ENCODE measurements at regions of chr9 and their contacts with region 1.

Region 1: DNA sequence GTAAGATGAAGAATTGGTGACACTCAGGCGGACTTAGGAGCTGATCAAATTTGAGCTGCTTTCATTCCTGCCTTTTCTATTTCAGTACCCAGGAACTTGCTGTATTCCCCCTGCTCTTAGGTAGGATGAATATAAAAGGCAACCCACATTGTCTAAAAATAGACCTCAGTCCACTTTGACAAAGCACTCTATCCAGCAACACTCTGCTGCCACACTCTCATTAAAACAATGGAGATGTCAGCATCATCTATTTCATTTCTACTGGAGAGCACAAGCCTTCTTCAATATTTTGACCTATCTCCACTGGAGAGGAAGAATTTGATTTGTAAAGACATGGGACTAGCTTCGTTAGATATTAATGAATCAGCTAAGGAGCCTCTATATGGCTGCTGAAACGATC is 468.4 kb downstream of the PTPRD start:
- DNase-seq: no peak
- H3K4me3 ChIP-seq: no peak overlapping the region
- H3K4me3 Mint-ChIP-seq: no peak overlapping the region
- H3K27ac ChIP-seq: no peak overlapping the region
- H3K27ac Mint-ChIP-seq: no peak overlapping the region
- H3K4me1 ChIP-seq: no peaks in the 10 kb centered on the region
- H3K4me1 Mint-ChIP-seq: no peaks in the 10 kb centered on the region
- H3K27me3 ChIP-seq: no peaks in the 10 kb centered on the region
- H3K27me3 Mint-ChIP-seq: peaks cover 0 to 2% (median 0%) of the 10 kb centered on the region in 3 donors
- CTCF ChIP-seq: no peak

Region 2: GRCh38 chr9:10208691-10209069 is 64.3 kb after region 1 on chr9:
- intact Hi-C with region 1: loop called in 1 of 2 experiments (anchors 10 kb)
- DNase-seq: no peak
- H3K4me3 ChIP-seq: no peak overlapping the region
- H3K4me3 Mint-ChIP-seq: peak overlapping the region in 1 of 2 donors; percentile 81
- H3K27ac ChIP-seq: no peak overlapping the region
- H3K27ac Mint-ChIP-seq: no peak overlapping the region
- H3K4me1 ChIP-seq: no peaks in the 10 kb centered on the region
- H3K4me1 Mint-ChIP-seq: no peaks in the 10 kb centered on the region
- H3K27me3 ChIP-seq: no peaks in the 10 kb centered on the region
- H3K27me3 Mint-ChIP-seq: peaks cover 5 to 8% (median 6%) of the 10 kb centered on the region in 3 donors
- CTCF ChIP-seq: no peak

Region 3: GRCh38 chr9:10238087-10238486 is 93.7 kb after region 1 on chr9:
- intact Hi-C with region 1: no loop called
- DNase-seq: no peak
- H3K4me3 ChIP-seq: no peak overlapping the region
- H3K4me3 Mint-ChIP-seq: no peak overlapping the region
- H3K27ac ChIP-seq: no peak overlapping the region
- H3K27ac Mint-ChIP-seq: no peak overlapping the region
- H3K4me1 ChIP-seq: no peaks in the 10 kb centered on the region
- H3K4me1 Mint-ChIP-seq: no peaks in the 10 kb centered on the region
- H3K27me3 ChIP-seq: no peaks in the 10 kb centered on the region
- H3K27me3 Mint-ChIP-seq: no peaks in the 10 kb centered on the region
- CTCF ChIP-seq: no peak